GM12878 (cell line): ENCODE measurements at regions of chr11 and their contacts with region 1.

Region 1: DNA sequence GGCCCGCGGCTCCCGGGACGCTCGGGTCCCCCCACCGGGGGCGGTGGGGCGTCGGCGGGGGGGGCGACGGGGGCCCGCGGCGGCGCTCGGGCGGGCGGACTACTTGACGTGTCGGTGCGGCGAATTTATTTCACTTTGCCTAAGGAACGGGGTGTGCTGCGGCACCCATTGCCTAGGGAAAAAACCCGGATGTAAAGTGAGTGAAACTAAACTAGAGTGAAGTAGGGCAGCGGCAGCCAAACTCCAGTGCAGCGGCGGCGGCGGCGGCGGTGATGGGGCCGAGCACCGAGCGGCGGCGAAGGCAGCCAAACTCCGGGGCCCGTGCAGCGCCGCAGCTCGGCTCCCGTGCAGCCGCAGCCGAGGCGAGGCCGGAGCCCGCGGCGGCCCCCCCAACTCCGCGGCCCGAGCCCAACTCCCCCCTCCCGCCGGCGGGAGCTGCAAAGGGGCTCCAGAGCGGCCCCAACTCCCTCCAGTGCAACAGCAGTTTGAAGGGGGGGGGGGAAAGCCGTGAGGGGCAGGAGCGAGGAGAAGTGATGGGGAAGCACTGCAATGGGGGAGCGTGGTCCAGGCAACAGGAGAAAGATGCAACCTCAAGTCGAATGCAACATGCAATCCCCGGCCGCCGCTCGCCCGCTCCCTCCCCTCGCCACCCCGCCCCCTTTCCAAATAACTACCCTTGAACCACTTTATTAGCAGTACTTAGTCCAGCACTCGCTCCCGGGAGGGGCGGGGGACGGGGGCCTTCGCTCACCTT is 647 bp upstream of the PHF21A start:
- DNase-seq: no peak
- ATAC-seq: peak; percentile 47
- H3K4me3 ChIP-seq: peak overlapping the region; percentile 95
- H3K27ac ChIP-seq: peak overlapping the region; percentile 34; the same call in 1 of the 2 replicates
- H3K4me1 ChIP-seq: peaks cover 3% of the 10 kb centered on the region; the same call in 1 of the 2 replicates
- H3K27me3 ChIP-seq: no peaks in the 10 kb centered on the region
- CTCF ChIP-seq: no peak
- EP300 ChIP-seq: no peak
- POLR2A ChIP-seq: peak; percentile 11
- RAD21 ChIP-seq: no peak

Region 2: GRCh38 chr11:45786272-45786671 is 335.6 kb before region 1 on chr11:
- CTCF ChIA-PET with region 1: no interaction called
- POLR2A ChIA-PET with region 1: no interaction called
- RAD21 ChIA-PET with region 1: no interaction called
- SMC1A ChIA-PET with region 1: no interaction called
- in situ Hi-C with region 1: no loop called
- intact Hi-C with region 1: no loop called
- DNase-seq: no peak
- ATAC-seq: no peak
- H3K4me3 ChIP-seq: no peak overlapping the region
- H3K27ac ChIP-seq: no peak overlapping the region
- H3K4me1 ChIP-seq: no peaks in the 10 kb centered on the region
- H3K27me3 ChIP-seq: no peaks in the 10 kb centered on the region
- CTCF ChIP-seq: no peak
- EP300 ChIP-seq: no peak
- POLR2A ChIP-seq: no peak
- RAD21 ChIP-seq: no peak

Region 3: GRCh38 chr11:45872513-45873356 is 249.2 kb before region 1 on chr11:
- CTCF ChIA-PET with region 1: interaction called, 10 read pairs
- POLR2A ChIA-PET with region 1: interaction called, 3 read pairs
- RAD21 ChIA-PET with region 1: no interaction called
- SMC1A ChIA-PET with region 1: no interaction called
- in situ Hi-C with region 1: no loop called
- intact Hi-C with region 1: no loop called
- DNase-seq: no peak
- ATAC-seq: peak; percentile 97
- H3K4me3 ChIP-seq: no peak overlapping the region
- H3K27ac ChIP-seq: no peak overlapping the region
- H3K4me1 ChIP-seq: no peaks in the 10 kb centered on the region
- H3K27me3 ChIP-seq: no peaks in the 10 kb centered on the region
- CTCF ChIP-seq: peak; percentile 54 to 73 (median 63)
- EP300 ChIP-seq: no peak
- POLR2A ChIP-seq: no peak
- RAD21 ChIP-seq: peak; percentile 55

Region 4: DNA sequence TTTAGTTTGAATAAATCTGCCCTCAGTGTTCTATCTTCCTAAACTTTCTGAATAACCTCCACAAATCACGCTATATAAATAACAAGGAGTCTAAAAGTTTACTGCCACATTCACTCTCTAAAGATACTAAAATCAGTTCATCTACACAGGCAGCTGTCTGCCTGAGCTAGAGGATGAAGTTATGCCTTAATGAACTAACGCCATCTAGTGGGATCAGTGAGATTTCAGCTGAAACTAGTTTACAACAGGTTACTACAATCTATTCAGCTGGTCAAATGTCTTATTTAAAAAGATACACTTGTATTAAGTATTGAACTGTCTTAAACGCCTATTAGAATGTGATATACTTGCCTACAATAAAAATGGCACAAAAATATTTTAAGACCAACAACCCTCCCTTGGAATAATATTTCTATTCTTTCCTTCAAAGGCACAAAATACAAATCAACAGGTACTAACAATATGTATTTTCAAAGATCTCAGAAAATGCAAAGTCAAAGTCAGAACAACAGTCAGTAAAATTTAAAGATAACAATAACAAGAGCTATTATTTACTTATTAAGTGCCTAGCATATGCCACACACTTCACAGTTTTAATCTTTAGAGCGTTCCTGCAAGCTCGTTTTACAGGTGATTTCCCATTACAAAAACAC is 115.4 kb before region 1 on chr11:
- CTCF ChIA-PET with region 1: interaction called, 12 read pairs
- POLR2A ChIA-PET with region 1: no interaction called
- RAD21 ChIA-PET with region 1: interaction called, 7 read pairs
- SMC1A ChIA-PET with region 1: interaction called, 20 read pairs
- in situ Hi-C with region 1: no loop called
- intact Hi-C with region 1: no loop called
- DNase-seq: peak; percentile 37
- ATAC-seq: peak; percentile 96
- H3K4me3 ChIP-seq: no peak overlapping the region
- H3K27ac ChIP-seq: no peak overlapping the region
- H3K4me1 ChIP-seq: no peaks in the 10 kb centered on the region
- H3K27me3 ChIP-seq: no peaks in the 10 kb centered on the region
- CTCF ChIP-seq: peak; percentile 71 to 80 (median 72)
- EP300 ChIP-seq: no peak
- POLR2A ChIP-seq: no peak
- RAD21 ChIP-seq: peak; percentile 81

Region 5: DNA sequence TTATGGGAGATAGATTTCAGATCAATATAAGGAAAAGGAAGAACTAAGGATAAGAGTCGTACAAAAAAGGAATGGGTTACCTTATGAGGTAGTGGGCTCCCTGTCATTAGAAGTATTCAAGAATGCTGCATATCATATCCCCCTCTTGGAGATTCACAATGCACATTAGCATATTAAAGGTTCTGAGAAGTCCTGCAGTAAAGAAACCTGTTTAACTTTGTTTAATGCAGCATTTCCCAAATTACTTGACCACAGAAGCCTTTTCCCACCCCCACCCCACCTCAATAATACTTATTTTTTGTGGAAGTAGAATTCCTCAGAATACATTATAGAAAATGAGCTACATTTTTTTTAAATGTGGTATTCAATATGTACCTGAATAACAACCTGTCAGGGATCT is 31.5 kb before region 1 on chr11:
- CTCF ChIA-PET with region 1: interaction called, 4 read pairs
- POLR2A ChIA-PET with region 1: no interaction called
- RAD21 ChIA-PET with region 1: interaction called, 3 read pairs
- SMC1A ChIA-PET with region 1: interaction called, 10 read pairs
- in situ Hi-C with region 1: no loop called
- intact Hi-C with region 1: no loop called
- DNase-seq: no peak
- ATAC-seq: no peak
- H3K4me3 ChIP-seq: no peak overlapping the region
- H3K27ac ChIP-seq: no peak overlapping the region
- H3K4me1 ChIP-seq: no peaks in the 10 kb centered on the region
- H3K27me3 ChIP-seq: no peaks in the 10 kb centered on the region
- CTCF ChIP-seq: no peak
- EP300 ChIP-seq: no peak
- POLR2A ChIP-seq: no peak
- RAD21 ChIP-seq: no peak

Region 6: DNA sequence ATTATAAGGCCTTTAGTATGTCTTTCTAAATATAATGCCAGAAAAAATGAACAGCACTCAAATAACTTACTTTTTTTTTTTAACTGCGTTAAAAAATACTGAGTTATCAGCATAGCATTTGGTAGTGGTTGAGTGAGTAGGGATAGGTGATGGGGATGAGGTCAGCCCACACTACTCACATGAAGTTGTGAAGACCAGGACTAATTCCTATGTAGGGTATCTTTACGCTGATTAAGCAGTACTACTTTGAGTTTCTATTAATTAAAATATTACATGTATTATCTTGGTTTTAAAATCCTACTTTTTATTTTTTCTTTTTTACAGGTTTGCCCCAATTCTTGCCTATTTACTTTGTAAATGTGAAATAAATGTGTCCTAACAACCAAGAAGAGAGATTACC is 14.1 kb before region 1 on chr11:
- CTCF ChIA-PET with region 1: interaction called, 133 read pairs
- POLR2A ChIA-PET with region 1: interaction called, 96 read pairs
- RAD21 ChIA-PET with region 1: interaction called, 64 read pairs
- SMC1A ChIA-PET with region 1: interaction called, 137 read pairs
- in situ Hi-C with region 1: no loop called
- intact Hi-C with region 1: no loop called
- DNase-seq: no peak
- ATAC-seq: no peak
- H3K4me3 ChIP-seq: no peak overlapping the region
- H3K27ac ChIP-seq: no peak overlapping the region
- H3K4me1 ChIP-seq: no peaks in the 10 kb centered on the region
- H3K27me3 ChIP-seq: no peaks in the 10 kb centered on the region
- CTCF ChIP-seq: no peak
- EP300 ChIP-seq: no peak
- POLR2A ChIP-seq: no peak
- RAD21 ChIP-seq: no peak

Region 7: DNA sequence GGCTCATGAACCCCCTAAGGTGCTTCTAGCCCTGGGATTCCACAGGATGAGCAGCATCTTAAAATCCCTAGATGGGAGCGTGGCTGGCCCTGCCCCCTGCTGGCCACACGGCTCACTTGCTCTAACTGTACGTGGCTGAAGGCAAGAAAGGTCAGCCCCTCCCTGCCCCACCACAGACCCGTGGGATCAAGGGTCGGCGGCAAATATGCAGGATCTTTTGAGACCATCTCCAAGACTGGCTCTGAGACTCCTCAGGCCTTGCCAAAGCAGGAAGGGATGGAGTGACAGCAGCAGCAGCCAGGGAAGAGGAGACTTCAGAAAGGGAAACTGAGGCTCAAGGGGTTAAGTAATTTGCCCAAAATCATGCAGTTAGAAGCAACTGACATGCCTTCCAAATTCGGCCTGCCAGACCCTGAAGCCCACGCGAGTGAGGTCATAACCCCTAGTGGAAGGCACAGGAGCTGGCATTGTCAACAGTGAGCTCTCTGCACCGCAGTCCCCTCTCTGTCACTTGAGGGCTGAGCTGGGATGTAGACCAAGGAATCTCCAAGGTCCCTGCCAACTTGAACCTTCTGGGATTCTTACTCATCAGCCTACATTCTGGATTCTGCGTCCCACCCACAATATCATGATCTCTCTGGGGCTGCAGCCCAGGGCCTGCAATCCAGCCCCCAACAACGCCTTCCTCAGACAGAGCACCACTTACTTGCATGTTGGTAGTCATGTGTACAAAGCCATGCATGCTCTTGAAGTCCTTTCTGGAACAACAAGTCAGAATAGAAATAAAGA is 186.9 kb after region 1 on chr11:
- CTCF ChIA-PET with region 1: interaction called, 3 read pairs
- POLR2A ChIA-PET with region 1: interaction called, 4 read pairs
- RAD21 ChIA-PET with region 1: no interaction called
- SMC1A ChIA-PET with region 1: interaction called, 4 read pairs
- in situ Hi-C with region 1: no loop called
- intact Hi-C with region 1: loop called (anchors 5 kb)
- DNase-seq: no peak
- ATAC-seq: peak; percentile 90
- H3K4me3 ChIP-seq: no peak overlapping the region
- H3K27ac ChIP-seq: no peak overlapping the region
- H3K4me1 ChIP-seq: peaks cover 7% of the 10 kb centered on the region
- H3K27me3 ChIP-seq: no peaks in the 10 kb centered on the region; a peak in 1 of 4 replicates
- CTCF ChIP-seq: peak; percentile 85 to 96 (median 93)
- EP300 ChIP-seq: no peak
- POLR2A ChIP-seq: no peak
- RAD21 ChIP-seq: peak; percentile 88